ENCODE measurements at regions of chr5 and their contacts with region 1.

Region 1: GRCh38 chr5:163347671-163348070 is 89.7 kb upstream of the CCNG1 start:
- DNase-seq: peak; percentile 65
- H3K4me3 ChIP-seq: peak overlapping the region in 1 of 2 experiments; percentile 25; a peak in 1 of 4 replicates
- H3K27ac ChIP-seq: no peak overlapping the region
- H3K4me1 ChIP-seq: peaks cover 0 to 4% of the 10 kb centered on the region in 2 experiments; a peak in 1 of 4 replicates
- H3K27me3 ChIP-seq: no peaks in the 10 kb centered on the region
- CTCF ChIP-seq: peak; percentile 96
- EP300 ChIP-seq: no peak
- RAD21 ChIP-seq: peak; percentile 94

Region 2: GRCh38 chr5:161544350-161544765 is 1803.3 kb before region 1 on chr5:
- CTCF ChIA-PET with region 1: interaction called, 16 read pairs
- POLR2A ChIA-PET with region 1: no interaction called
- DNase-seq: peak; percentile 61
- H3K4me3 ChIP-seq: peak overlapping the region in 1 of 2 experiments; percentile 28; a peak in 1 of 4 replicates
- H3K27ac ChIP-seq: no peak overlapping the region
- H3K4me1 ChIP-seq: peaks cover 0 to 3% of the 10 kb centered on the region in 2 experiments; a peak in 1 of 4 replicates
- H3K27me3 ChIP-seq: peaks cover 32% of the 10 kb centered on the region
- CTCF ChIP-seq: peak; percentile 90
- EP300 ChIP-seq: no peak
- RAD21 ChIP-seq: peak; percentile 59

Region 3: GRCh38 chr5:162209005-162209605 is 1138.6 kb before region 1 on chr5:
- CTCF ChIA-PET with region 1: interaction called, 37 read pairs
- POLR2A ChIA-PET with region 1: no interaction called
- DNase-seq: peak; percentile 42
- H3K4me3 ChIP-seq: peak overlapping the region in 1 of 2 experiments; percentile 43; a peak in 1 of 4 replicates
- H3K27ac ChIP-seq: no peak overlapping the region
- H3K4me1 ChIP-seq: no peaks in the 10 kb centered on the region
- H3K27me3 ChIP-seq: no peaks in the 10 kb centered on the region
- CTCF ChIP-seq: peak; percentile 52
- EP300 ChIP-seq: no peak
- RAD21 ChIP-seq: peak; percentile 50

Region 4: DNA sequence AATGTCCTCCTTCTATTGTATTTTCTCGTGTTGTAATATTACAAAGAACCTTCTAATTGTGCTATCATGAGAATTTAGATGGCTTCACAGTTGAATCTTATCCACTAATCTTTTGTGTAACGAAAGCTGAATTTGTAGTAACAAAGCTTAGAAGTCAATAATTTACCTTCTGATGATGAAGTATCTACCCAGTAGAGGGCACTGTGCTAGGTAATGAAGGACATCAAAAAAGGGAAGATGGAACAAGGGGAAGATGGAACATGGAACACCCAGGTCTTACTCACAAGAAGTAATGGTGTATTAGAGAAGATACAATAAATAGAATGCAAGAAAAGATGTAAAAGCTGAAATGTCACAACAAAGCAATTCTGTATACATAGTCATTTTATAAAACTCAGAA is 41.2 kb before region 1 on chr5:
- CTCF ChIA-PET with region 1: interaction called, 26 read pairs
- POLR2A ChIA-PET with region 1: no interaction called
- DNase-seq: peak; percentile 16
- H3K4me3 ChIP-seq: no peak overlapping the region; a peak in 1 of 4 replicates
- H3K27ac ChIP-seq: no peak overlapping the region
- H3K4me1 ChIP-seq: no peaks in the 10 kb centered on the region
- H3K27me3 ChIP-seq: no peaks in the 10 kb centered on the region
- CTCF ChIP-seq: peak; percentile 57
- EP300 ChIP-seq: no peak
- RAD21 ChIP-seq: no peak; the same call in 1 of the 2 replicates

Region 5: GRCh38 chr5:163330723-163331668 is 16.7 kb before region 1 on chr5:
- CTCF ChIA-PET with region 1: interaction called, 12 read pairs
- POLR2A ChIA-PET with region 1: no interaction called
- DNase-seq: no peak
- H3K4me3 ChIP-seq: no peak overlapping the region
- H3K27ac ChIP-seq: no peak overlapping the region
- H3K4me1 ChIP-seq: no peaks in the 10 kb centered on the region
- H3K27me3 ChIP-seq: no peaks in the 10 kb centered on the region; the same call in 1 of the 2 replicates
- CTCF ChIP-seq: no peak
- EP300 ChIP-seq: no peak
- RAD21 ChIP-seq: no peak

Region 6: GRCh38 chr5:163362840-163363788 is 15.4 kb after region 1 on chr5:
- CTCF ChIA-PET with region 1: interaction called, 25 read pairs
- POLR2A ChIA-PET with region 1: no interaction called
- DNase-seq: peak; percentile 55
- H3K4me3 ChIP-seq: no peak overlapping the region
- H3K27ac ChIP-seq: peak overlapping the region in 1 of 2 experiments; percentile 34; a peak in 1 of 4 replicates
- H3K4me1 ChIP-seq: peaks cover 0 to 3% of the 10 kb centered on the region in 2 experiments; a peak in 2 of 4 replicates
- H3K27me3 ChIP-seq: no peaks in the 10 kb centered on the region
- CTCF ChIP-seq: no peak
- EP300 ChIP-seq: peak in 1 of 2 experiments; percentile 70; a peak in 2 of 4 replicates
- RAD21 ChIP-seq: no peak

Region 7: GRCh38 chr5:163369776-163370385 is 22.2 kb after region 1 on chr5:
- CTCF ChIA-PET with region 1: interaction called, 12 read pairs
- POLR2A ChIA-PET with region 1: no interaction called
- DNase-seq: no peak
- H3K4me3 ChIP-seq: no peak overlapping the region
- H3K27ac ChIP-seq: no peak overlapping the region
- H3K4me1 ChIP-seq: no peaks in the 10 kb centered on the region
- H3K27me3 ChIP-seq: no peaks in the 10 kb centered on the region
- CTCF ChIP-seq: no peak
- EP300 ChIP-seq: no peak
- RAD21 ChIP-seq: no peak